ENCODE measurements at regions of chr11 and their contacts with region 1.

Region 1: GRCh38 chr11:48109046-48109666 is 107.5 kb upstream of the OR4B1 start:
- DNase-seq: peak; percentile 39

Region 2: GRCh38 chr11:47932544-47932943 is 176.6 kb before region 1 on chr11:
- CTCF ChIA-PET with region 1: interaction called, 22 read pairs
- POLR2A ChIA-PET with region 1: no interaction called
- DNase-seq: no peak

Region 3: DNA sequence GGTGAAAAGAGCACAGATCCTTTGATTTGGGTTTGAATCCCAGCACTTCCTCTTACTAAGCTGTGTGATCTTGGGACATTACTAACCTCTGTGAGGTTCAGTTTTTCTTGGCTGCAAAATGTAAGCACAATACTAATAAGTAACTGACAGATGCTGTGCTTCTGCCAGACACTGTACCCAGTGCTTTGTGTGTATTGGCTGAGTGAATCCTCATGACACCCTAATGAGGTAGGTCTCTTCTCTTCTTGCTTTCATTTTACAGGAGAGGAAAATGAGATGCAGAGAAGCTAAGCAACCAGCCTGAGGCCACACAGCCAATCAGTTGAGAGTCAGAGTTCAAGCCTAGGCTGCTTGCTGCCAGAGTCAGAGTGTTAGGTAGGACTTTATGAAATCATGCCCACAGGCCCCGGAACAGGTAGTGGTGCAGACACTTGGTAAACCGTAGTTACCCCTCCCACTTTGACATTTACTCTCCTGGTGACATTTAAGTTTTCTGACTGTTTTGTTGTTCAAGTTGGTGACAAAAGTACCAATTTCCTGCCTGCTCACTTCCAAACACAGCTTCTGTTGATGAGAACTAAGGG is 107.6 kb before region 1 on chr11:
- CTCF ChIA-PET with region 1: no interaction called
- POLR2A ChIA-PET with region 1: no interaction called
- DNase-seq: no peak